ENCODE measurements at regions of chr11 and their contacts with region 1.

Region 1: DNA sequence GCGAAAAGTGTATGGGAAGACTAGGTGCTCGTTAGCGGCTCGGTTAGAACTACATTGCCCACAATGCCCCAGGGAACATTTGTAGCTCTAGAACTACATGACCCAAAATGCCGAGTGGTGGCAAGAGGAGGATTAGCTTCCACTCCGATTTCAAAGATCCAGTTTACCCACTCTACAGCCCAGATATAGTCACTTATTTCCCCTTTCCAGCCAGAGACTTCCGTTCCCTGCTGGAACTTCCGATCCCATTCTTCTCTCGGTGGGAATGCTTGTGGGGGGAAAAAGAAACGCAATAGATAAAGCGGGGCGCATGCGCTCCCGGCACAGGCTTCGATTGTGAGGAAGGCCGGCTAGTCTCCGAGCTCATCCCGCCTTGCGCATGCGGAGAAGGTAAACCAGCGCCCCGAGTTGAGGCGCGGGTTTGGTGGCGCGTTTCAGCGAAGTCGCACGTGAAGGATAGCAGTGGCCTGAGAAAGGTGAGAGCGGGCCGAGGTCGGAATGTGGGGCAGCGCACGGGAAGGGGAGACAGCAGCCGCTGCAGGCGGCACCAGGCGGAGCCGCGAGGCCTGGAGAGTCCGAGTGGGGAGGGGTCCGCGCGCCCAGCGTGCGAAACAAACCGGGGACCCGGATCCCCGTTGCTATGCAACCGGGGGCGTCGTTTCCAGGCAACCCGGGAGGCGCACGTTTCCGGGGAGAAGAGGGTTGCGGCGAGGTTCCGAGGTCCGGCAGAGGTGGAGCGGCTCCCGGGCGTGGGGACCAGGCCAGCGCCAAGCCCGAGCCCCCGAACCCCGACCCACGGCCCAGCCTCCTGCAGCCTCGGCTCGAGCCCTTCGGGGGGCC is at the start of gene TMEM109:
- DNase-seq: peak; percentile 93
- ATAC-seq: peak; percentile 78
- H3K4me3 Mint-ChIP-seq: peak within 1 kb of the TSS; percentile 87
- H3K27ac Mint-ChIP-seq: peak within 1 kb of the TSS; percentile 97
- H3K4me1 Mint-ChIP-seq: peaks cover 58% of the 10 kb centered on the region
- H3K27me3 Mint-ChIP-seq: no peaks in the 10 kb centered on the region
- total RNA-seq, gene TMEM109: 80.3 to 89.1 TPM

Region 2: GRCh38 chr11:60841797-60842667 is 72.0 kb before region 1 on chr11 and contains the start of gene CCDC86:
- CTCF ChIA-PET with region 1: interaction called, 3 read pairs
- POLR2A ChIA-PET with region 1: no interaction called
- intact Hi-C with region 1: loop called (anchors 1 to 2 kb)
- DNase-seq: peak; percentile 98
- ATAC-seq: peak; percentile 95
- H3K4me3 Mint-ChIP-seq: peak within 1 kb of the TSS; percentile 83
- H3K27ac Mint-ChIP-seq: peak within 1 kb of the TSS; percentile 96
- H3K4me1 Mint-ChIP-seq: peaks cover 38% of the 10 kb centered on the region
- H3K27me3 Mint-ChIP-seq: no peaks in the 10 kb centered on the region
- total RNA-seq, gene CCDC86: 52.1 to 75.1 TPM

Region 3: DNA sequence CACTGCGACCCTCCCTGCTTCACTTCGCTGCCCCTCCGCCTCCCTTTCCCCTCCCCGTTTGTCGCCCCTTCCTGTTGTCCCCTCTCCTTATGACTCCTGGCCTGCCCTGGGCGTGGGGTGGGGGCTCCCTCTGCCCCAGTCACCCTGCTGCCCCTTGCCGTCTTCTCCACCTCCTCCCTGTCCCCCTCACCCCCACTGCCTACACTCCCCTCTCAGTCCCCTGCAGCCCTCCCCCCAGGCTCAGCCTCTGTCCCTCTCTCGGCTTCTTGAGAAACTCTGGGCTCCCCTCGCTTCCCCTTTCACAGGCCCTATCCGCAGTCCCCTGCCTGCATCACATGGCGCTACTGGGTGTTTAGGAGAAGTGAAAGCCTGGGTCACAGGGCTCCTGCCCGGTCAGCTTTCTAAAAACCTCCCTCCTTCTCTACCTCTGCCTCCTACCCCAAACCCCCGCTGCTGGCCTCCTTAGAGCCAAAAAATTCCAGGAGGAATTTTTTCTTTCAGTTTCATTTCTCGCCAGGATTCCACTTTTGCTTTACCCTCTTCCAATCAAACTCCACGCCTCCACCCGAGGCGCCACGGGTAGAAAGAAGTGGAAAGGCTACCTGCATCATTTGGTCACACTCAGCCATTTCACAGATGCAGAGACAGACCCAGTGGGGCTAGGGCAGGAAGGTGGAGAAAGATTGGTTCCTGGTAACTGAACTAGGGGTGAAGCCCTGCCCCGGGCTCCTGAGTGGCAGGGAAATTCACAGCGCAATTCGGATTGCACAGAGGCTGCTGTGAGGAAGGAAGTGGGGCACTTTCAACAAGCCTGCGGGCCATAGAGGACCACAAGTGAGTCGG is 38.1 kb after region 1 on chr11 and contains the start of gene SLC15A3:
- CTCF ChIA-PET with region 1: interaction called, 3 read pairs
- POLR2A ChIA-PET with region 1: no interaction called
- intact Hi-C with region 1: loop called in 1 of 2 experiments (anchors 2 kb)
- DNase-seq: peak; percentile 52
- ATAC-seq: peak; percentile 71
- H3K4me3 Mint-ChIP-seq: peak within 1 kb of the TSS; percentile 75
- H3K27ac Mint-ChIP-seq: peak within 1 kb of the TSS; percentile 85
- H3K4me1 Mint-ChIP-seq: peaks cover 21% of the 10 kb centered on the region
- H3K27me3 Mint-ChIP-seq: peaks cover 7% of the 10 kb centered on the region
- total RNA-seq, gene SLC15A3: 7.0 to 9.6 TPM

Region 4: DNA sequence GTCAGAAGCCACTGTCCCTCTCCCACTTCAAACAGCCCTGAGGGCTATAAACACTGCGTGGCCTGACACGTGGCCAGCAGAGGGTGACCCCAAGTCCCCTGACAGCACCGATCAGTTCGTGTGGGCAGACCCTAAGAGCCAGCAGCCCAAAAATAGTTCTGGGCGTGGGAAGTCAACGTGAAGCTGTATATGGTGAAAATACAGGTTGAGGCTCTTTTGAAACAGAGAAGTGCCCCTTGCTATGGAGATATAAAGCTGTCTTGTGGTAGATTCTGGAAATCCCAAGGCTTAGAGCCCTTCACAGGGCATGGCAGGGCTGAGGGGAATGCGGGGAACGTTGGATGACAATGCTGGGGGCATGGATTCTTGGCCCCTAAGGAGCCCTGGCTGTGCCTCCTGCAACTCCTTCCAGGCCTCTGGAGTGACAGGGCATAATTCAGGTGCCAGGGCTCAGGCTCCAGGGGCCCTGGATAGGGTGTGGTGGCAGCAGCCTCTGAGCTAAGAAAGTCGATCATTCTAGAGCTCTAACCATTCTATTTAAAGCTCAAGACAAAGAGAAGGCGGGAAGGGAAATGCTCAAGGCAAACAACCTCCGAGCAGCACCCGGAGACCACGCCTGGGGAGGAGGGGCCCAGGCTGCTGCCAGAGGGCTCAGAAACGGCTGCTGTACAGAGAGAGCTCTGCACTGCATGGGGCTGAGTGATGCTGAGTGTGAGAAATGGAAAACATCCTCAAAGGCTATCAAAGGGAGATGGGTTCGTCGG is 127.9 kb after region 1 on chr11:
- CTCF ChIA-PET with region 1: no interaction called
- POLR2A ChIA-PET with region 1: interaction called, 6 read pairs
- intact Hi-C with region 1: loop called in 1 of 2 experiments (anchors 2 kb)
- DNase-seq: peak; percentile 92
- ATAC-seq: peak; percentile 94
- H3K4me3 Mint-ChIP-seq: peak overlapping the region; percentile 64
- H3K27ac Mint-ChIP-seq: peak overlapping the region; percentile 91
- H3K4me1 Mint-ChIP-seq: peaks cover 72% of the 10 kb centered on the region
- H3K27me3 Mint-ChIP-seq: no peaks in the 10 kb centered on the region

Region 5: DNA sequence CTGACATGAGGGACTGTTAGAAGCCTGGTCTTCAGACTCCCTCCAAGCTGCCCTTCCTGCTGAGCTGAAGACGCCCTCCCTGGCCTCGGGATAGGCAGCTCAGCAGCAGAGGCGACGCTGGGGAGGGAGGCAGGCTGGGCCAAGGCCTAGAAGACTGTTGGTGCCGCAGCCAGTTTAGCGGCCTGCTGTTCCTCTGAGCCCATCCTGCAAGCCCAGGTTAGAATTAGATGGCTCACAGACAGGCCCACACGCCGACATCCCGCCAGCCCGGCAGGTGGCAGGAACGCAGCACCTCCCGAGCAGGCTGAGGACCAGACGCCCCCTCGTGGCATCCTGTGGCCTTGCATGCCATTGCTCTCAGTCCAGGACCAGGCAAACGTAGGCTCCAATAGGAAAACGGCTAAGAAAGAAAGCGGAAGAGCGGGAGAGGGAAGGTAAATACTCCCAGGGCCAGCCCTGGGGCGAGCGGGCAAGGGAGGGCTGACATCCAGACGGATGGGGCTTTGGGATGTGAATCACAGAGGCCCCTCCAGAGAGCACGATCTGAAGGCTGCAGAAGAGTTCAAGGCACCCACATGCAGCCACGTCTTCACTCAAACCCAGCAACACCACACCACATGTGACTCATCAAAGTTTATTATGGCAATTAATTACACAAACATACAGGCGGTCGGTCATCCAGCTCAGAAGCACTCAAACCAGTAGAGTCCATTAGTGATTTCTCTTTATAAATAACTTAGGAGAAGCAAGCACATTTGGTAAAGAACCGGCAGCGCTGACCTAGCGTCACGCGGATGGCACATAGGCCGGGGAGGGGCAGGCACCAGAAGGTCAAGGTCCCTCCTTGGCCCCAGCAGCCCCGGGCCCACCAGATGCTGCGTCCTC is 215.9 kb after region 1 on chr11:
- CTCF ChIA-PET with region 1: interaction called, 11 read pairs
- POLR2A ChIA-PET with region 1: no interaction called
- intact Hi-C with region 1: loop called in 1 of 2 experiments (anchors 1 kb)
- DNase-seq: peak; percentile 97
- ATAC-seq: peak; percentile 89
- H3K4me3 Mint-ChIP-seq: peak overlapping the region; percentile 14
- H3K27ac Mint-ChIP-seq: peak overlapping the region; percentile 64
- H3K4me1 Mint-ChIP-seq: peaks cover 27% of the 10 kb centered on the region
- H3K27me3 Mint-ChIP-seq: no peaks in the 10 kb centered on the region

Region 6: GRCh38 chr11:61361686-61362541 is 447.9 kb after region 1 on chr11 and contains the starts of genes CYB561A3 and TMEM138:
- CTCF ChIA-PET with region 1: no interaction called
- POLR2A ChIA-PET with region 1: no interaction called
- intact Hi-C with region 1: loop called in 1 of 2 experiments (anchors 1 kb)
- DNase-seq: peak; percentile 95
- ATAC-seq: peak; percentile 96
- H3K4me3 Mint-ChIP-seq: peak within 1 kb of the TSS; percentile 100
- H3K27ac Mint-ChIP-seq: peak within 1 kb of the TSS; percentile 100
- H3K4me1 Mint-ChIP-seq: peaks cover 34% of the 10 kb centered on the region
- H3K27me3 Mint-ChIP-seq: no peaks in the 10 kb centered on the region
- total RNA-seq, gene CYB561A3: 31.8 to 34.4 TPM
- total RNA-seq, gene TMEM138: 38.6 to 56.5 TPM

Region 7: DNA sequence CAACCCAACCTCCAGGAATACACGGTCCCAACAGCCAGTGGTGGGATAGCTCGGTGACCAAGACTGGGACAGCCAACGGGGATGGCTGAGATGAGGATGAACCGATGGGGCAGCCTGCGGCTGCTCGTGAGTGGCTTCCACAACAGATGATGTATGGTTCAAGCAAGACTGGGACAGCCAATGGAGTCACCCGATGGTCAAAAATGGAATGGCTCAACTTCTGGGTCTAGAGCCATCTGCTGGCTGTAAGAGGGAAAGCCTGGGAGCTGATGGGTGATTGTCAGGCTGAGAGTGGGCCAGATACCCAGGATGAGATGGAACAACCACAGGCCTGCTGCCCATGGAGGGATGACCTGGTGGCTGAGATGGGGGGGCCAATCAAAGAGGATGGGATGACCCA is 631.3 kb after region 1 on chr11:
- CTCF ChIA-PET with region 1: no interaction called
- POLR2A ChIA-PET with region 1: no interaction called
- intact Hi-C with region 1: no loop called
- DNase-seq: no peak
- ATAC-seq: no peak
- H3K4me3 Mint-ChIP-seq: no peak overlapping the region
- H3K27ac Mint-ChIP-seq: no peak overlapping the region
- H3K4me1 Mint-ChIP-seq: no peaks in the 10 kb centered on the region
- H3K27me3 Mint-ChIP-seq: peaks cover 11% of the 10 kb centered on the region

Measured in activated CD4-positive, alpha-beta T cell treated with anti-CD3 and anti-CD28 coated beads for 36 hours (primary cell).